ENCODE measurements at regions of chr1 and their contacts with region 1.

Region 1: GRCh38 chr1:15975805-15976680 is at the start of gene ZBTB17:
- DNase-seq: peak; percentile 85 to 90
- ATAC-seq: peak; percentile 98 to 100
- H3K4me3 ChIP-seq: peak within 1 kb of the TSS; percentile 84 to 96 (median 88)
- H3K27ac ChIP-seq: peak within 1 kb of the TSS; percentile 84 to 96 (median 88)
- H3K4me1 ChIP-seq: peaks cover 8 to 17% of the 10 kb centered on the region in 2 donors
- H3K27me3 ChIP-seq: no peaks in the 10 kb centered on the region
- CTCF ChIP-seq: no peak
- POLR2A ChIP-seq: peak; percentile 70 to 80
- total RNA-seq, gene ZBTB17: 25.9 to 44.1 (median 31.5) TPM

Region 2: DNA sequence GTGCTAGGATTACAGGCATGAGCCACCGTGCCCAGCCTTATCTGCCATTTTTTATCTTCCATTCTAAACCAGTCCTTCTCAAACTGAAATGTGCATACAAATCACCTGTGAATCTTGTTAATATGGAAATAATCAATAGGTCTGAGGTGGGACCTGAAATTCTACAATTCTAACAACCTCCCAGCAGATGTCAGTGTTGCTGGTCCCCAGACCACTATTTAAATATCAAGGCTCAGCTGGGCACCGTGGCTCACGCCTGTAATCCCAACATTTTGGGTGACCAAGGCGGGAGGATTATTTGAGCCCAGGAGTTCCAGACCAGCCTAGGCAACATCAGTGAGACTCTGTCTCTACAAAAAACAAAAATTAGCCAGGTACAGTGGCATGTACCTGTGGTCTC is 172.7 kb before region 1 on chr1:
- in situ Hi-C with region 1: loop called in 2 of 4 experiments (anchors 25 kb)
- intact Hi-C with region 1: no loop called
- DNase-seq: no peak
- ATAC-seq: no peak
- H3K4me3 ChIP-seq: no peak overlapping the region
- H3K27ac ChIP-seq: no peak overlapping the region
- H3K4me1 ChIP-seq: peaks cover 10 to 17% of the 10 kb centered on the region in 2 donors
- H3K27me3 ChIP-seq: no peaks in the 10 kb centered on the region
- CTCF ChIP-seq: peak in 3 of 5 experiments; percentile 26 to 33 (median 29)
- POLR2A ChIP-seq: no peak

Region 3: GRCh38 chr1:15949453-15950245 is 26.4 kb before region 1 on chr1:
- in situ Hi-C with region 1: no loop called
- intact Hi-C with region 1: loop called (anchors 2 kb)
- DNase-seq: peak; percentile 86 to 93
- ATAC-seq: peak; percentile 85
- H3K4me3 ChIP-seq: peak overlapping the region; percentile 21 to 50 (median 42)
- H3K27ac ChIP-seq: peak overlapping the region; percentile 84 to 87 (median 85)
- H3K4me1 ChIP-seq: peaks cover 58% of the 10 kb centered on the region in 2 donors
- H3K27me3 ChIP-seq: no peaks in the 10 kb centered on the region
- CTCF ChIP-seq: no peak
- POLR2A ChIP-seq: peak in 1 of 2 donors; percentile 59

Measured in gastrocnemius medialis (tissue), 4 donors.